ENCODE measurements at regions of chr12 and their contacts with region 1.

Region 1: DNA sequence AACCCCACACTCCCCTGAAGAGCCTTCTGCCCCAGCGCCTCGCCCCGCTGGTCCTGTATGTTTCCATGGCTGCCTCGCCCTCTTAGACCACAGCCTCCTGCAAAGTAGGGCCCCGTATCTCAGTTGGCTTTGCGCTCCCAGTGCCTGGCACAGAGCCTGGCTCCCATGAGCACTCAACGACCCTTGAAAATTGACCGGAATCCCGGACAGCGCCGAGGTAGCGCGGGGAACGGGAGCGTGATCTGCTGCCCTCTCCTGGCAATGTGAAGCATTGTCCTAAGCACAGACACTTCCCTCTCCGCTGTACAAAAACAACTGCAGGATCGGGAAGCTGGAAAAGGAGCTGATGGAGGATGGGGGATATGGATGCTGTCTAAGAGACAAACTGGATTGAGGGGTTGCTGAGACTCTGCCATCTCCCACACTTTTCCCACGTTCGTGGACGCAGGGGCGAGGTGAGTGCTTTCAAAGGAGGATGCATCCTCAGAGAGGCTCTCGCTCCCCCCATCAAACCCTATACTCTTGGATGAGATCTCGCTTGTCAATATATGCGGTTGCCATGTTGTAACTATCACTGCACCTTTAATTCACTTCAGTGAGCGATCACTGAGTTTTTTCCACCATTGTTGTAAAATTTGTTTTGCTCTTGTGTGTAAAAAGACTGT is 10.7 kb upstream of the FKBP4 start:
- DNase-seq: peak; percentile 69 to 84 (median 78)
- ATAC-seq: peak; percentile 84 to 95 (median 95)
- H3K4me3 ChIP-seq: peak overlapping the region in 9 of 12 donors; percentile 13 to 35 (median 27)
- H3K27ac ChIP-seq: no peak overlapping the region
- H3K4me1 ChIP-seq: peaks cover 0 to 10% (median 4%) of the 10 kb centered on the region in 12 donors
- H3K27me3 ChIP-seq: peaks cover 0 to 6% (median 0%) of the 10 kb centered on the region in 9 donors
- CTCF ChIP-seq: peak; percentile 83 to 96 (median 90)
- POLR2A ChIP-seq: no peak

Region 2: GRCh38 chr12:2682296-2683251 is 101.5 kb before region 1 on chr12:
- intact Hi-C with region 1: loop called in 2 of 10 experiments (anchors 10 kb)
- DNase-seq: no peak
- ATAC-seq: peak in 2 of 4 donors; percentile 28 to 39
- H3K4me3 ChIP-seq: no peak overlapping the region
- H3K27ac ChIP-seq: no peak overlapping the region
- H3K4me1 ChIP-seq: peaks cover 0 to 9% (median 2%) of the 10 kb centered on the region in 12 donors
- H3K27me3 ChIP-seq: no peaks in the 10 kb centered on the region
- CTCF ChIP-seq: peak in 11 of 12 donors; percentile 13 to 50 (median 37)
- POLR2A ChIP-seq: no peak

Region 3: DNA sequence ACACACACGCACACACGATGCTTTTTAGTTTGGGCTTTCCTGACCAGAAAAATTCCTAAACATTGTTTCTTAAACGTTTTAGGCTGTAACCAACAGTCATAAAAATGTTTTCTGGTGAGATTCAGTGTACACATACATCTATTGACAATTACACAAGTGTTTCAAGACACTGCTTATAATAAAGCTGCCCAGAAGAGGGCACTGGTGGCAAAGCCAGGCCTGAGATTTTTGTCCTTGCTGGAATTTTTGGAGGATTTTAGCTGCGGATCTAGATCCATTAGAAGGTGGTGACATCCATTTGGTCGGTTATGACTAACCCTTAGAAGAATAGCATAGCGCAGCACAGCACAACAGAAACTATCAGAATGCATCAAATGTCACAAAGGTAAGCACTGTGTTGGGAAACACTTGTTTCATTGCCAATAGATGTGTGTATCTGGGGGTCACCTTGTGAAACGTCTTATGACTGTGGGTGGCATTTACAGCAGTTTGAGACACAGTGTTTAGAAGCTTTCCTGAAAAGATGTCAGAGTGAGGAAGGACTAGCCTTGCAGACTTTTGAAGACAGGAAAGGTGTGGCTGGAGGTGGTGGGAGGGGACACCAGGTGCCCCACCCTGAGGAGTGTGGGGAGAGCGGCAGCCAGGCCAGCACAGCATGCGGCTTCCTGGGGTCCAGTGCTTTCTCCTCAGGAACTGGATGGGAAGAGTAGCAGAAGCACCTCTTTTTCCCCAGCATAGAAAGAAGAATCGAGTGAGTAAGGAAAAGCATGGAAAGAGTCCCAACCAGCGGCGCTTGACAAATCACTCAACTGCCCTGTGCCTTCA is 44.0 kb before region 1 on chr12:
- intact Hi-C with region 1: loop called in 4 of 10 experiments (anchors 1 to 5 kb)
- DNase-seq: no peak
- ATAC-seq: no peak
- H3K4me3 ChIP-seq: no peak overlapping the region
- H3K27ac ChIP-seq: no peak overlapping the region
- H3K4me1 ChIP-seq: no peaks in the 10 kb centered on the region
- H3K27me3 ChIP-seq: peaks cover 0 to 3% (median 0%) of the 10 kb centered on the region in 9 donors
- CTCF ChIP-seq: peak; percentile 30 to 62 (median 50)
- POLR2A ChIP-seq: no peak

Measured in heart left ventricle (tissue), 16 donors.